Naive thymus-derived CD4-positive, alpha-beta T cell (primary cell): ENCODE measurements at regions of chr20 and their contacts with region 1.

Region 1: GRCh38 chr20:31723319-31724078 is 831 bp upstream of the BCL2L1 start:
- DNase-seq: peak; percentile 97 to 99 (median 98)
- ATAC-seq: peak; percentile 95
- H3K4me3 ChIP-seq: peak overlapping the region; percentile 92
- H3K4me3 Mint-ChIP-seq: peak overlapping the region; percentile 89 to 97 (median 96)
- H3K27ac ChIP-seq: peak overlapping the region; percentile 98
- H3K27ac Mint-ChIP-seq: peak overlapping the region; percentile 48 to 97 (median 94)
- H3K4me1 ChIP-seq: peaks cover 14 to 32% of the 10 kb centered on the region in 2 donors
- H3K4me1 Mint-ChIP-seq: peaks cover 27 to 44% (median 38%) of the 10 kb centered on the region in 7 donors
- H3K27me3 ChIP-seq: no peaks in the 10 kb centered on the region
- H3K27me3 Mint-ChIP-seq: no peaks in the 10 kb centered on the region

Region 2: DNA sequence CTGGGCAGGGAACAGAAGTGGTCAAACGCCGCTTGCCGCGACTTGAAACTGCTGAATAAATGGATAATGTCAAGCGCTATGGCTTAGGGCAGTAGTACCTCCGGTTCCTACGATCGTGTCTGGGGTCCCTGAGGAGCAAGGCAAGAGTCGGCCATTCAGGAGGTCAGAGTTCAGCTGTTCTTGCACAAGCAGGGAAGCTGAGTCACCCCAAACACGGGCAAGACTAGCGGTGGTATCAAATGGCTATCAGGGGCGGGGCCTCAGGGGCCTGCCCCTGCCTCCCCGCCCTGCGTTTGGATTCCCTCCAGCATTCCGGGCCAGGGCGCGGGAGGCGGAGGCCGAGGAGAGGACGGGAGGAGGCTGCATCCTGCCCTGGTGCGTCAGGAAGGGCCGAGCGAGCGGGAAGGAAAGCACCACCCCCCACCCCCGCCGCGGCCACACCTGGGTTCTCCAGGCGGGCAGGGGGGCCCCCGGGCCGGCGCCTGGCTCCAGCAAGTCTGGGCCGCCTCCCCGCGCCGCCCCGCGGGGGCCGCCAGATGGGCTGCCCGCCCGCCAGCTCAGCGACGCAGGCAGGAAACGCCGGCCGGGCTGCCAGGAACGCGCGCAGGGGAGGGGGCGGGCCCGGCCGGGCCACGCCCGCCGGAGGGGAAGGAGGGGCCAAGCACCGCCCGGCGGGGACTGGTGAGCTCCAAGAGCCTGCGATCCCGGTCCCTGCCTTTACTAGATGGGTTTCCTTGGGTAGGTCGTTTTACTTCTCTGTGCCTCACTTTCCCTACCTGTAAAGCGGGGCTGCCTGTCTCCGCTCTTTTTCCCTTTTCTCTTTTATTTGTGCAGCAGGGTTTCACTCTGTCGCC is 150.6 kb before region 1 on chr20:
- CTCF ChIA-PET with region 1: no interaction called
- POLR2A ChIA-PET with region 1: interaction called, 11 read pairs
- intact Hi-C with region 1: loop called (anchors 1 to 2 kb)
- DNase-seq: peak; percentile 67 to 85 (median 77)
- ATAC-seq: peak; percentile 95
- H3K4me3 ChIP-seq: peak overlapping the region; percentile 74
- H3K4me3 Mint-ChIP-seq: peak overlapping the region; percentile 85 to 93 (median 90)
- H3K27ac ChIP-seq: peak overlapping the region; percentile 87
- H3K27ac Mint-ChIP-seq: peak overlapping the region; percentile 89 to 96 (median 93)
- H3K4me1 ChIP-seq: peaks cover 5 to 9% of the 10 kb centered on the region in 2 donors
- H3K4me1 Mint-ChIP-seq: peaks cover 17 to 32% (median 22%) of the 10 kb centered on the region in 7 donors
- H3K27me3 ChIP-seq: no peaks in the 10 kb centered on the region
- H3K27me3 Mint-ChIP-seq: no peaks in the 10 kb centered on the region

Region 3: DNA sequence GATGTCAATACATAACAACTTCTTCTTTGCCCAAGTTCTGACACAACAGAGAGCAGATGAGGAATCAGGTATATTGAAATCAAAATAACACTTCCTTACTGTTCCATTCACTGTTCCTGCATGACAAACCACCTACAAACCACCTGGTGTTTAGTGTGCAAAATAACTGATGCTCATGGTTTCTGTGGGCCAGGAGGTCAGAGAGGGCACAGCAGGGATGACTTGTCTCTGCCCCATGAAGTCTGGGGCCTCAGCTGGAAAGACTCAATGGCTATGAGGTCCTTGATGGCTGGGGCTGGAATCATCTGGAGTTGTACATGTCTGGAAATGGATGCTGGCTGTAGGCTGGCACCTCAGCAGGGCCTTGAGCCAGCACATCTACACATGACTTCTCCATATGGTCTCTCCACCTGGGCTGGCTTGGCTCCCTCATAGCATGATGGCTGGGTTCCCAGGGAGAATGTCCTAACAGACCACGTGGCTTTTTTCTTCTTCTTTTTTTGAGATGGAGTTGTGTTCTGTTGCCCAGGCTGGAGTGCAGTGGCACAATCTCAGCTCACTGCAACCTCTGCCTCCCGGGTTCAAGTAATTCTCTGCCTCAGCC is 93.2 kb before region 1 on chr20:
- CTCF ChIA-PET with region 1: interaction called, 11 read pairs
- POLR2A ChIA-PET with region 1: no interaction called
- intact Hi-C with region 1: loop called (anchors 1 kb)
- DNase-seq: no peak
- ATAC-seq: no peak
- H3K4me3 ChIP-seq: no peak overlapping the region
- H3K4me3 Mint-ChIP-seq: no peak overlapping the region
- H3K27ac ChIP-seq: no peak overlapping the region
- H3K27ac Mint-ChIP-seq: no peak overlapping the region
- H3K4me1 ChIP-seq: no peaks in the 10 kb centered on the region
- H3K4me1 Mint-ChIP-seq: no peaks in the 10 kb centered on the region
- H3K27me3 ChIP-seq: no peaks in the 10 kb centered on the region
- H3K27me3 Mint-ChIP-seq: no peaks in the 10 kb centered on the region

Region 4: DNA sequence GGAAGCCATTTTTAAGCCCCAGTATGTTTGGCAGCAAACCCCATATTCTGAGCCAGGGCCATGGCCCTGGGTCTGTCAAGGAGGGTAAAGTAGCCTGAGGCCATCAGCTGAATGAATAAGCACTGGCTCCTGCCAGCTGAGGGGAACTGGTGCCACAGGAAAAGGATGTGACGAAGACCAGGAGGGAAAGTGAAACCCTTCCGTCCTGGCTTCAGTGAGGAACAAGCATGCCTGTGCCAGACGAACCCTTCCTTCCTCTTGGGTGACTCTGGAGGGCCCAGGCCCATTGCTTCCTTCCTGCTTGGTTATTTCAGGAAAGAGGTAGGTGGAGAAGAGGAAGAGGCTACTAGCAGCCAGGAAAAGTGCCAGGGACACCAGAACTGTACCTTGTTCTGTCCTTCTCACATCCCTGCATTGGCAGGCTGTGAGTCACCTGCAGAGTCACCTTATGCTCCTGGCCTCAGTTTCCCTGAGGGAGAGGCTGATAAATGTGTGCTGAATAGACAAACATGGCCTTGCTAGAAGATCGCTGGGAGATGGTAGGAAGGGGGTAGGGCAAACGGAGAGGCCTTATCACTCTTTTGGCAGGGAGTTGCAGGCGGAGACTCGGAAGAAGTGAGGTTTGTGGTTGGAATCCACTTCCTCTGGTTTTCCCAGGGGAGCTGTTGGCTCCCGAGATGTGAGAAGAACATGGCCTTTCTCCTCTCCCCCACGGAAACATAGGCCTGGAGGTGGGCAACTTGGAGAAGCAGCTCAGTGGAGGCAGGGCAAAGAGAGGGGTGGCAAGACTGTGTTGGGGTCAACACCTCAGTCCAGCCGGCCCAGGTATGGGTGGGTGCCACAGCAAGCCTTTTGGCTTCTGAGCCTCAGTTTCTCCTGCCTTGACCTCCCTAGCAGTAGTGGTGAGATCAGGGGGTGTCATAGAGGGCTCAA is 48.3 kb before region 1 on chr20:
- CTCF ChIA-PET with region 1: interaction called, 23 read pairs
- POLR2A ChIA-PET with region 1: interaction called, 51 read pairs
- intact Hi-C with region 1: loop called (anchors 1 kb)
- DNase-seq: peak; percentile 31 to 65 (median 57)
- ATAC-seq: peak; percentile 85
- H3K4me3 ChIP-seq: peak overlapping the region; percentile 88
- H3K4me3 Mint-ChIP-seq: peak overlapping the region; percentile 86 to 100 (median 96)
- H3K27ac ChIP-seq: peak overlapping the region; percentile 84
- H3K27ac Mint-ChIP-seq: peak overlapping the region; percentile 87 to 100 (median 96)
- H3K4me1 ChIP-seq: peaks cover 53 to 63% of the 10 kb centered on the region in 2 donors
- H3K4me1 Mint-ChIP-seq: peaks cover 56 to 87% (median 65%) of the 10 kb centered on the region in 7 donors
- H3K27me3 ChIP-seq: no peaks in the 10 kb centered on the region
- H3K27me3 Mint-ChIP-seq: no peaks in the 10 kb centered on the region

Region 5: DNA sequence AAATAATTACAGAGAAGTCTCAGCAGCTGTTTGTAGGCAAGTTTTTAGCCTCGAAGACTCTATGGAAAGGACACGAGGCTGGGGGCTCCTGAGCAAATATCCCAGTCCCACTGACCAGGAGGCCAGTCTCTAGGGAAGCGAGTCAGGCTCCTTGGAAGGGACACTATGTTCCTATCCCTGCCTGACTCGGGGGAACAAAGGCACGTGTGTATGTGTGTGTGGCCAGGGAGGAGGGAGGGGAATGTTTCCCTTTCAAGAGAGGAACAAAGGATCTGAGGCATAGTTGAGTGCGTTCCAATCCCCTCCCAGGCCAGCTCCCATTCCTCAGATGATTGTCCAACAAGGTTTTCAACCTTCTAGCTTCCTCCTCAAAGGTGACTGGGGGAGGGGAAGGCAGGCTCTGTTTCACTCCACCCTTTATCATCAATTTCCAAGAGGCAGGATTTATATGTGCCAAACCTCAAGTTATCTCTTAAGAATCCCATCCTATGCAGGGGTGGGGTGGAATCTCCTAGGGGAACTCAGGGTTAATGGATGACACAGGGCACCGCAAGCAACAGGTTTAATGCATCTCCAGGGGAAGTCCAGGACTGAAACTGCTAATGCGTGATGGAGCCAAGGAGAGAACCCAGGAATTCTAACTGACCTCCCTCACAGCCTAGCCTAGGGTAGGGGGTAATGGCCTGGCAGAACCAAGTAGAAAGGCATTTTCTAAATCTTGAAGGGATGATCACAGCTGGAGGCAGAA is 10.8 kb before region 1 on chr20:
- CTCF ChIA-PET with region 1: interaction called, 7 read pairs
- POLR2A ChIA-PET with region 1: interaction called, 5 read pairs
- intact Hi-C with region 1: loop called in 1 of 2 experiments (anchors 1 kb)
- DNase-seq: no peak
- ATAC-seq: no peak
- H3K4me3 ChIP-seq: no peak overlapping the region
- H3K4me3 Mint-ChIP-seq: peak overlapping the region in 3 of 10 donors; percentile 0 to 50 (median 0)
- H3K27ac ChIP-seq: peak overlapping the region; percentile 27
- H3K27ac Mint-ChIP-seq: peak overlapping the region; percentile 20 to 79 (median 53)
- H3K4me1 ChIP-seq: peaks cover 16 to 54% of the 10 kb centered on the region in 2 donors
- H3K4me1 Mint-ChIP-seq: peaks cover 52 to 90% (median 85%) of the 10 kb centered on the region in 7 donors
- H3K27me3 ChIP-seq: no peaks in the 10 kb centered on the region
- H3K27me3 Mint-ChIP-seq: no peaks in the 10 kb centered on the region

Region 6: GRCh38 chr20:31951530-31952453 is 228.3 kb after region 1 on chr20 and contains the start of gene PDRG1:
- CTCF ChIA-PET with region 1: no interaction called
- POLR2A ChIA-PET with region 1: no interaction called
- intact Hi-C with region 1: loop called in 1 of 2 experiments (anchors 1 kb)
- DNase-seq: peak; percentile 92 to 99 (median 97)
- ATAC-seq: peak; percentile 100
- H3K4me3 ChIP-seq: peak within 1 kb of the TSS; percentile 90
- H3K4me3 Mint-ChIP-seq: peak within 1 kb of the TSS; percentile 90 to 100 (median 98)
- H3K27ac ChIP-seq: peak within 1 kb of the TSS; percentile 76
- H3K27ac Mint-ChIP-seq: peak within 1 kb of the TSS; percentile 88 to 99 (median 96)
- H3K4me1 ChIP-seq: peaks cover 6 to 12% of the 10 kb centered on the region in 2 donors
- H3K4me1 Mint-ChIP-seq: peaks cover 17 to 37% (median 35%) of the 10 kb centered on the region in 7 donors
- H3K27me3 ChIP-seq: no peaks in the 10 kb centered on the region
- H3K27me3 Mint-ChIP-seq: peaks cover 9 to 17% (median 13%) of the 10 kb centered on the region in 5 donors
- total RNA-seq, gene PDRG1: 7.5 to 13.6 (median 11.4) TPM